Dendritic cell treated with granulocyte-macrophage colony-stimulating factor and Interleukin-4, amounts not matched to agents 40 ng/mL and 50 ng/mL, for 4 days (primary cell): ENCODE measurements at regions of chr6 and their contacts with region 1.

Region 1: DNA sequence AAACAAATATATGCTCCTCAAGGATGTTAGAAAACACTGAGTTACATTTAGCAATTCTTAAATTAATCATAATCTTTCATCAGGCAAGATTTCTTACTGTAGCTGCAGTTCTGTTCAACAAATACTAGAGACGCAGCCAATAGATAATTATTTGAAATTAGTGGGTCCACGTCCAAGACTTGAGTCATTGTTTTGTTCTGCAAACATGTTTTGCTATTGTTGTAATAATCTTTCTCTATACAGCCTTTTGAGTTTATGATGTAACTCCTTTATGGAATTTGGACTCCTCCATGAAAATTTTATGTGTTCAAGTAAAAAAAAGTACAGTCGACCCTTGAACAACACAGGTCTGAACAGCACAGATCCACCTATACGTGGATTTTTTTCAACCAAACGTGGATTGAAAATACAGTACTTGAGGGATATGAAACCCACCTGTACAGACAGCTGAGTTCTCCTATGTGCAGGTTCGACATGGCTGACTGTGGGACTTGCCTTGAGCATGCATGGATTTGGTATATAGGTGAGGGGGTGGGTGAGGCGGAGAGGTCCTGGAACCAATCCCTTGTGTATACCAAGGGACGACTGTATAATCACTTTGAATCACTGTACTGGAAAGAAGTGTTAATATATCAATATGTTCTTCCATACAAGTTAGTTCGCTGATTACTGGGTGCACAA is 41.3 kb upstream of the SLC22A16 start:
- H3K4me3 Mint-ChIP-seq: no peak overlapping the region
- H3K27ac Mint-ChIP-seq: no peak overlapping the region
- H3K4me1 Mint-ChIP-seq: peaks cover 4% of the 10 kb centered on the region
- H3K27me3 Mint-ChIP-seq: no peaks in the 10 kb centered on the region

Region 2: DNA sequence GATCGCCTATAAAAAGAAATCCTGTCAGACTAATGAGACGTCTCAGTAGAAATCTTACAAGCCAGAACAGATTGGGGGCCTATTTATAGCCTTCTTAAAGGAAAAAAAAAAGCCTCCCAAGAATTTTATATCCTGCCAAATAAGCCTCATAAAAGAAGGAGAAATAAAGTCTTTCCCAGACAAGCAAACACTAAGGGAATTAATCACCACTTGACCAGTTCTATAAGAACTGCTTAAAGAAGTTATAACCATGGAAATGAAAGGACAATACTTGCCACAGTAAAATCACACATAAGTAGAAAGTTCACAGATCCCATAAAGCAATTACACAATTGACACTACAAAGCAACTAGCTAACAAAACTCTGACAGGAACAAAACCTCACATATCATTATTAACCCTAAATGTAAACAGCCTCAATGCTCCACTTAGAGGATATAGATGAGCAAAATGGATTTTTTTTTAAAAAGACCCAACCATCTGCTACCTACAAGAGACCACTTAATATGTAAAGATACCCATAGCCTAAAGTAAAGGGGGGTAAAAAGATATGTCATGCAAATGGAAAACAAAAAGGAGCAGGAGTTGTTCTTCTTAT is 54.8 kb before region 1 on chr6:
- intact Hi-C with region 1: loop called (anchors 5 kb)
- H3K4me3 Mint-ChIP-seq: no peak overlapping the region
- H3K27ac Mint-ChIP-seq: no peak overlapping the region
- H3K4me1 Mint-ChIP-seq: no peaks in the 10 kb centered on the region
- H3K27me3 Mint-ChIP-seq: no peaks in the 10 kb centered on the region